Psoas muscle (tissue), 8 donors: ENCODE measurements at regions of chr7 and their contacts with region 1.

Region 1: GRCh38 chr7:36054637-36055036 is 98.4 kb upstream of the EEPD1 start:
- DNase-seq: no peak
- ATAC-seq: no peak
- H3K4me3 ChIP-seq: no peak overlapping the region
- H3K27ac ChIP-seq: no peak overlapping the region
- H3K4me1 ChIP-seq: peaks cover 13% of the 10 kb centered on the region
- H3K27me3 ChIP-seq: no peaks in the 10 kb centered on the region
- CTCF ChIP-seq: no peak

Region 2: GRCh38 chr7:35430547-35431153 is 624.0 kb before region 1 on chr7:
- intact Hi-C with region 1: no loop called
- DNase-seq: no peak
- ATAC-seq: no peak
- H3K4me3 ChIP-seq: no peak overlapping the region
- H3K27ac ChIP-seq: no peak overlapping the region
- H3K4me1 ChIP-seq: no peaks in the 10 kb centered on the region
- H3K27me3 ChIP-seq: no peaks in the 10 kb centered on the region
- CTCF ChIP-seq: peak; percentile 7

Region 3: GRCh38 chr7:36015733-36016132 is 38.9 kb before region 1 on chr7:
- intact Hi-C with region 1: no loop called
- DNase-seq: no peak
- ATAC-seq: no peak
- H3K4me3 ChIP-seq: no peak overlapping the region
- H3K27ac ChIP-seq: no peak overlapping the region
- H3K4me1 ChIP-seq: no peaks in the 10 kb centered on the region
- H3K27me3 ChIP-seq: no peaks in the 10 kb centered on the region
- CTCF ChIP-seq: no peak

Region 4: DNA sequence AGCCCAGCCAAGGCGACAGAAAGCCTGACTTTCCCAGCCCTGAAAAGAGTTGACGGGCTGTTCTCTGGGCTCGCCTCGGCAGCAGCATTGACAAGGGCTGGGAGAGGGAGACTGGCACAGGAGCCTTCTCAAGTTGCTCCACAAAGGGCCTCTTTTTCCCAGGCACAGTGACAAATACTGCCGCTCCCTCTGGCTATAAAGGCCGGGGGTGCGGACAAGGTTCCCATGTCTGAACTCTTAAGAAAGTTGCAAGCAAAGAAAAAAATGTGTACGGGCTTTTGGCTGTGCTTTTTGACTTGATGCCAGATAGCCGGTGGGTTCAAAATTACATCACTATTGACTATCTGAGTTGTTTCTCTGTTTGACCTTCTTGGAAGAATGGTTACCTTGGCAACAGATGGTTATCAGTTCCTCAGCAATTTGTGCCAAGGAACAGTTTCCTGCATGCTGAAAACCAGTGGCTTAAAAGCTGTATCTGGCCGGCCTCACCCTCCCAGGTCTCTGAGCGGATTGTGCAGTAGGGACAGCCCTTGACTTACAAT is 17.4 kb before region 1 on chr7:
- intact Hi-C with region 1: loop called in 1 of 2 experiments (anchors 1 kb)
- DNase-seq: peak; percentile 43 to 62
- ATAC-seq: peak; percentile 31 to 69 (median 49)
- H3K4me3 ChIP-seq: no peak overlapping the region
- H3K27ac ChIP-seq: peak overlapping the region; percentile 58
- H3K4me1 ChIP-seq: peaks cover 16% of the 10 kb centered on the region
- H3K27me3 ChIP-seq: no peaks in the 10 kb centered on the region
- CTCF ChIP-seq: no peak